ENCODE measurements at regions of chr11 and their contacts with region 1.

Region 1: GRCh38 chr11:96154802-96155520 is 188.0 kb downstream of the MAML2 start:
- DNase-seq: no peak
- ATAC-seq: no peak
- H3K4me3 Mint-ChIP-seq: no peak overlapping the region
- H3K27ac Mint-ChIP-seq: peak overlapping the region; percentile 47
- H3K4me1 Mint-ChIP-seq: peaks cover 62% of the 10 kb centered on the region
- H3K27me3 Mint-ChIP-seq: no peaks in the 10 kb centered on the region
- CTCF ChIP-seq: no peak

Region 2: DNA sequence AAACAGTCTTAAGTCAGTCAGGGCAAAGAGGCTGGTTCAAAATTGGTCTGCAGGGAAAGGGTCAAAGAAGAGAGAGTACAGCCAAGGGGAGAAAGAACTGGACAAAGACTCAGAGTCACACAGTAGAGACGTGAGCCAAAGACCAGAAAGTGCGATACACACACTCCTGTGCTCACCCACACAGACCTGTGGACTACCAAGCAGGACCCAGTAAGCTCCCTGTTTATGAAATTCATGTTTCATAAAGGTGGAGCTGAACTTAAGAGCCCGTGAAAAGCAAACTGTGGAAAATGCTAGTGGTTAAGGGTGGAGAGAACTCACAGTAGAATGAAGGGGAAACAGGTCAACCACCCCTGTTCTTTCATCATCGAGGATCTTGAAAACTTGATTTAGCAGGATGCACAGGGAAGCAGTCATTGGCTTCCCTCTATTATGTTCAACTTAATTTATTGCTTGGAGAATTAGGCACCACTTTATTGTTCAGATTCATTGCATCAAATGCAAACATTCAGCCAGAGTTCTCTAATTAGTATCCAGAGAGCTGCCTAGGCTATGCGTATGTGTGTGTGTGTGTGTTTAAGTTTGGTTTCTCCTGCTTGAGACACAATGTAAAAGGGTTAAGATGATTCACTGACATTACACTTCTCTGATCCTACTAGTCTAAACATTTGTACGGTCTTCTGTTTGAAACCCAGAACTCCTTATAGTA is 70.2 kb before region 1 on chr11:
- CTCF ChIA-PET with region 1: interaction called, 3 read pairs
- POLR2A ChIA-PET with region 1: interaction called, 5 read pairs
- intact Hi-C with region 1: loop called (anchors 5 kb)
- DNase-seq: peak; percentile 29
- ATAC-seq: peak; percentile 81
- H3K4me3 Mint-ChIP-seq: peak overlapping the region; percentile 40
- H3K27ac Mint-ChIP-seq: no peak overlapping the region
- H3K4me1 Mint-ChIP-seq: peaks cover 34% of the 10 kb centered on the region
- H3K27me3 Mint-ChIP-seq: no peaks in the 10 kb centered on the region
- CTCF ChIP-seq: no peak

Region 3: DNA sequence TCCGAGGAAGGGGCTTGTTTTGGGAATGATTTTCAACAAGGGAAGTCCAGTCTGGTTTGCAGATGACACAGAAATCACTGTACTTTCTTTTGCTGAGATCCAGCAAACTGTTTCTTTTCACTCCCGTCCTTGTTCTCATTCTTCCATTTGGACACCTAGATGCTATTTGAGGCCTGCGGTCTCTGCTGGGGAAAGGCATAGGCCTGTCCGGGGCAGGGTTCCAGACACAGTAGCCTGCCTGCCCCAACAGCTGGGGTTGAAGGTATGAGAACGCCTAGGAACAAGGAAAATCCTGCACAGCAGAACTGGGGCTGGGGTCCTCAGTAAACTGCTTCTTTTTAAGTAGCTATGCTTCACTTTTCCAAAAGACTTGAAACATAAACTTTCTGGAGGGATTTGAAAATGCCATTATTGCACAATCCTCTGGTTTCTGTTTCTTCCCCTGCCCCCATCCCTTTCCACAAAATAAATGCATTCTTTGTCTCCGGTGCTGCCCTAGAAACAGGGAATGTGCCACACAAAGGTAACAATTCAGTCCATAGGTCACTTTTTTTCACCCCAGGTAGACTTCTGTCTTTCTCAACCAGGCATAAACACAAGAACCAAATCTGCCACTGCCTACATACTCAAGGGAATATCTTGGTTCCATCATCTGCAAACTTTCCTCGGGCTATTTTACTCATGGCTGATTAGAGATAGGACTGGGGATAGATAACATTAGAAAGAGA is 56.3 kb before region 1 on chr11:
- CTCF ChIA-PET with region 1: no interaction called
- POLR2A ChIA-PET with region 1: no interaction called
- intact Hi-C with region 1: no loop called
- DNase-seq: no peak
- ATAC-seq: no peak
- H3K4me3 Mint-ChIP-seq: no peak overlapping the region
- H3K27ac Mint-ChIP-seq: no peak overlapping the region
- H3K4me1 Mint-ChIP-seq: peaks cover 51% of the 10 kb centered on the region
- H3K27me3 Mint-ChIP-seq: no peaks in the 10 kb centered on the region
- CTCF ChIP-seq: no peak

Measured in activated CD8-positive, alpha-beta T cell treated with anti-CD3 and anti-CD28 coated beads for 36 hours (primary cell).